ENCODE measurements at regions of chr2 and their contacts with region 1.

Region 1: GRCh38 chr2:8681786-8682692 is at the start of gene ID2:
- DNase-seq: peak; percentile 99
- total RNA-seq, gene ID2: 35.1 TPM

Region 2: DNA sequence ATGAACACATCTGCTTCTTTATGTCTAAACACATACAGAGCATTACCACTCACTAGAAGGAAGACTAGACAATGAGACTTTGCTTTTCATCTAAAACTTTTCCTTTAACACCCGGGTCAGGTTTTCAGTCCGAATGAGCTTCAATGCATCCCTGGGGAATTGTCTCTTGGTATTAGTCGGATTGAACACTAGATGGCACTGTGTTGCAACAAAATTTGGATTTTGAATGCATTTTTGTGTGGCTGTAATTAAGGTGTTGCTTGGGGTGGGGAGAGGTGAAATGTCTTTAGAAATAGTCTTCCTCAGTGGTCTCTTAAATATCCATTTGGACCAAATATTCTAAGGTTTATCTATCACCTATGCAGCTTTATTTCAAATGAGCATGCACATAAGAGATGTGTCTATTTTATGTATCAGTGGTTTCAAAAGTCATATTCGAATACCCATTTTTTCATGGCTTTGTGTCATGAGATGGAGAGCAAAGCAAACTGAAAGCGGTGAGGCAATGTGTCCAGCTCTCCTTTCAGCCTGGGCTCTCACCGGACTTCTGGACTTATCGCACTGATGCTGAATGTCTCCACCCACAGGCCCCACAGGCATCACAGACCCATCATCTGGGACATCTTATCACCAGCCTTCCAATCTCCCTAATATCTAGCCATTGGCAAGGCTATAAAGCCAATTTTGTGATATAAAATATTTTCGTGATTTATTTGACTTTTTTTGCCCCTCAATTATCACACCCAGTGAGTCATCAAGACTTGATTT is 1254.6 kb before region 1 on chr2:
- intact Hi-C with region 1: loop called (anchors 1 kb)
- DNase-seq: no peak

Region 3: GRCh38 chr2:8134985-8135682 is 546.9 kb before region 1 on chr2:
- intact Hi-C with region 1: loop called (anchors 5 kb)
- DNase-seq: no peak

Region 4: GRCh38 chr2:8438476-8438875 is 243.6 kb before region 1 on chr2:
- intact Hi-C with region 1: loop called (anchors 10 kb)
- DNase-seq: no peak

Region 5: DNA sequence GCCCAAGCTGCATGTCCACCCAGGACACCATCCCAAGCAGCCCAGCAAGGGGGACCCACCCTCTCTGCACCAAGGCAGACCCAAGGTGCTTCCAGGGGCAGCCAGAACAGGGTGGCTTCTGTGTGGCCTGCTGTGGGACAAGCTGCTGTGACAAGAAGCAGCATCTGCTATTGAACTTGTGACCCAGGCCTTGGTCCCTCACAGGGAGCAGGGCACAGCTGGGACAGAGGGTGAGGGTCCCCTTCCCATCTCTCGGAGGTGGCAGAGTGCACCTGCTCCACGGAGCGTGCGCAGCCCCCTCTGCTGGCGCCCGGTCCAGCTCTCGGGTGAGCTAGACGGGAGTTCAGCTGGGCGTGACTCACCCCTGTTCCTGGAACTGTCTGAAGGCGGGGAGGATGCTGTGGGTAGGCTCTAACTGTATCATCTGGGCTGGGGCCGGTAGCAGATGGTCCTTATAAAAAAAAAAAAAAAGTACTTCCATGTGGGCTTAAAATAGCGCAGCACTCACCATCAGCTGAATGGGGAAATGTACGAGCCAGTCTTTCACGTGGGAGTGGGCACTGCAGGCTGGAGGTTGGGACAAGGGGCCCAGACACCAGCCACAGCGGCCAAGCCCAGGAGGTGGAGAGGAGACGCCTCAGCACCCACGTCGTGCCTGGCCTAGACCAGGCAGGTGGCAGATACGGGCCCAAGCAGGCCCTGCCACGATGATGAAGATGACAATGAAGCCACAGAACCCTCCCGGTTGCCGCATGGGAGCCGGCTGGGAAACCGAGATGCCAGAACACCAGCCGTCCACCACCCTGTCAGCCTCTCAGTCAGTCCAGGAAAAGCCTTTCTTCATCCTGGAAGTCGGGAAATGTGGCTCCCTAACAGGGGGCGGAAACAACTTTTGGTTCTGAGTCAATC is 137.0 kb before region 1 on chr2:
- intact Hi-C with region 1: loop called (anchors 2 kb)
- DNase-seq: peak; percentile 91

Measured in cardiac septum (tissue), 1 donor.